Heart left ventricle (tissue), 16 donors: ENCODE measurements at regions of chr3 and their contacts with region 1.

Region 1: DNA sequence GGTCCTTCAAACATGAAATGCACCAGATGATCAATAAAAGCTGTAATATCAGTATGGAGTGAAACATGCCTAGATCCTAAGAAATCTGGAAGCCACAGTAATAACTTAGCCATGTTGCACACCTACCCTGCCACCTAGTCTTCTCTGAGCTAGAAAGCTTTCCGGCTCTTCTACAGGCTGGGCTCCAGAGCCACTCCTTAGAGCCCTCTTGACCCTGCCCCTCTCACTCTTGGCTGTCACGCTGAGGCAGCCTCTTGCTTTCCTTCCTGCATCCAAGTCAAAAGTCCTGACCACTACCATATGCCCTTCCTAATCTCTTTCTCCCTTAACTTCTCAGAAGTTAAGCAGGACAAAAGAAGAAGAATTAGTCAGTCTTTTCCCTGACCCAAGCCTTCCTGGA is 17.7 kb downstream of the RBM15B start:
- DNase-seq: no peak
- ATAC-seq: no peak
- H3K4me3 ChIP-seq: no peak overlapping the region
- H3K27ac ChIP-seq: no peak overlapping the region
- H3K4me1 ChIP-seq: no peaks in the 10 kb centered on the region
- H3K27me3 ChIP-seq: no peaks in the 10 kb centered on the region
- CTCF ChIP-seq: no peak
- POLR2A ChIP-seq: no peak

Region 2: DNA sequence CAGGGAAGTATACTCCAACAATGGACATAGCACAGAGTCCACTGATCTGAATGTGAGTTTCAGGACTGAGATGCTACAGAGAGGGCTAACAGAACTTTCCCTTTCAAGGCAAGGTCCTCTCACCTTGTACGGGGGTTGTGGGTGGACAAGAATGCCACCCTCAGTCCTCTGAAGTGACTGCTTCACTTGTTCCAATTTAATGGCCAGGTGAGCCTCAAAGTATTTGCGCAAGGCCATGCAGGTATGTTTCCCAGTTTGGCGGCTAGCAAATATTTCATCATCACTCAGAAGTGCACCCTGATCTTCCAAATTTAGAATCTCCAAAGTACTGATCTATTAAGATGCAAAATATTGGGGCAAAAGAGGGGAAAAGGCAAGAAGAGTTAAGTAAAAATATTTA is 20.3 kb after region 1 on chr3:
- intact Hi-C with region 1: loop called in 1 of 10 experiments (anchors 1 kb)
- DNase-seq: no peak
- ATAC-seq: no peak
- H3K4me3 ChIP-seq: no peak overlapping the region
- H3K27ac ChIP-seq: no peak overlapping the region
- H3K4me1 ChIP-seq: no peaks in the 10 kb centered on the region
- H3K27me3 ChIP-seq: no peaks in the 10 kb centered on the region
- CTCF ChIP-seq: no peak
- POLR2A ChIP-seq: no peak